ENCODE measurements at regions of chr22 and their contacts with region 1.

Region 1: DNA sequence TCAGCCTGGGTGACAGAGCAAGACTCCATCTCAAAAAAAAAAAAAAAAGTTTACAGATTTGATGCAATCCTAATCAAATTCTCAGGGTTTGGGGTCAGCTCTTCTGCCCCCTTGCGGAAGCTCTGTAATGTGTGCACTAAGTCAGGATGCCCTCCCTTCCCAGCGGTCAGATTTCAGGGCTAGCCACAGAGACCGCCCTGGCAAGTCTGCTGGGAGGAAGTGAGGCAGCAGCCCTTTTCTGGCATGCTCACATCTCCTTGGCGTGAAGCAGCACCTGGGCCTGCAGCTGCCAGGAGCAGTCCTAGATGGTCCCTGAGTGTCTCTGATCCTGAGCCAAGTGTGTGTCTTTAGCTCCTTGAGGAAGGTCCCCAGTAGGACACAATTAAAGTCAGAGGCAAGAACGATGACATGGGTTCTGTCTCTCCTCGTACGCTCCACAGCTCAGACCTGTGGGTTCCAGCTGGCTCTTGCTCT is 10.9 kb upstream of the APOBEC3C start:
- DNase-seq: peak; percentile 72 to 83 (median 80)
- ATAC-seq: peak; percentile 93 to 99 (median 98)
- H3K4me3 ChIP-seq: no peak overlapping the region
- H3K27ac ChIP-seq: no peak overlapping the region
- H3K4me1 ChIP-seq: no peaks in the 10 kb centered on the region
- H3K27me3 ChIP-seq: no peaks in the 10 kb centered on the region
- CTCF ChIP-seq: peak; percentile 40 to 71 (median 52)

Region 2: GRCh38 chr22:39078329-39078728 is 75.1 kb after region 1 on chr22:
- intact Hi-C with region 1: no loop called
- DNase-seq: no peak
- ATAC-seq: no peak
- H3K4me3 ChIP-seq: peak overlapping the region in 1 of 4 donors; percentile 37
- H3K27ac ChIP-seq: no peak overlapping the region
- H3K4me1 ChIP-seq: no peaks in the 10 kb centered on the region
- H3K27me3 ChIP-seq: no peaks in the 10 kb centered on the region
- CTCF ChIP-seq: no peak

Region 3: GRCh38 chr22:39117585-39118191 is 114.5 kb after region 1 on chr22:
- intact Hi-C with region 1: loop called in 1 of 3 experiments (anchors 10 kb)
- DNase-seq: peak in 3 of 6 donors; percentile 39 to 55 (median 54)
- ATAC-seq: peak in 3 of 4 donors; percentile 69 to 84 (median 71)
- H3K4me3 ChIP-seq: no peak overlapping the region
- H3K27ac ChIP-seq: no peak overlapping the region
- H3K4me1 ChIP-seq: no peaks in the 10 kb centered on the region
- H3K27me3 ChIP-seq: peaks cover 0 to 3% (median 0%) of the 10 kb centered on the region in 4 donors
- CTCF ChIP-seq: peak in 3 of 4 donors; percentile 18 to 27 (median 23)

Measured in pancreas (tissue), 10 donors.